Calu3 (cell line): ENCODE measurements at regions of chr6 and their contacts with region 1.

Region 1: GRCh38 chr6:3061501-3061941 is 6.8 kb upstream of the RIPK1 start:
- DNase-seq: peak; percentile 18
- H3K4me3 Mint-ChIP-seq: no peak overlapping the region
- H3K27ac Mint-ChIP-seq: no peak overlapping the region
- H3K4me1 Mint-ChIP-seq: no peaks in the 10 kb centered on the region
- H3K27me3 Mint-ChIP-seq: peaks cover 11% of the 10 kb centered on the region
- CTCF ChIP-seq: no peak

Region 2: DNA sequence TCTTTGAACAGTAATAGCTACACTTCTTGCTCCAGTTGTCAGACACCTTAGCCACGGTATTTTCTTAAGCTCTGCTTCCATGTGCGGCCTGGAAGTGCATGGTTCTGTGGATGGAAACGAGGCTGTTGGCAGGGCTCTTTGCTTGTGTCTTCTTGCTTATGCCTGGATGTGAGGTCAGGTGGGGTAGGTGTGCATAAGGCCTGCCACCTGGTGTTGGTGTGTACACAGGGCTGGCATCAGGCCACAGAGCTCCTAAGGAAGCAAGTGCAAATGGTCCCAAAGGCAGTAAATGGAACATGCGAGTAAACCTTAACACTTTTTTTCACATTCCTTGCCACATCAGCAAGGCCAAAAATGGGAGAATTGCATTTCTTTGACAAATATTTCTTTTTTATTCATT is 658.0 kb before region 1 on chr6:
- CTCF ChIA-PET with region 1: no interaction called
- intact Hi-C with region 1: no loop called
- DNase-seq: no peak
- H3K4me3 Mint-ChIP-seq: no peak overlapping the region
- H3K27ac Mint-ChIP-seq: no peak overlapping the region
- H3K4me1 Mint-ChIP-seq: no peaks in the 10 kb centered on the region
- H3K27me3 Mint-ChIP-seq: no peaks in the 10 kb centered on the region
- CTCF ChIP-seq: no peak

Region 3: DNA sequence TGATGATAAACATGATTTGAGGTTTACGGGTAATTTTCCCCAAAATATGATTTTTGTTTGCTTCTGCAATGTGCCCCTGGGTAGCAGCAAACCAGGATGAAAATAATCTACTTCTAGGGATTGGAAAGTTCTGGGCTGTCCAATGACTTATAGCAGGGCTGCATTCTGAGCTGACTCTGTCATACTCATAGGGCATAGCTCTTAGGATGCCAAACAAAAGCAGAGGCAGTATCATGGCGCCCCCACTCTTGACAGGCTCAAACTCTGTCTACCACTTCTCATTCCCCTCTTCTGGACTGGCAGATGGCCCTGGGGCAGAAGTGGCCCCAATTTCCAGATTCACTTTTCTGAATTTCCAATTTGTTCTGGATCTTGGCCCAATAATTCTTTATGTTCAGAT is 230.1 kb before region 1 on chr6:
- CTCF ChIA-PET with region 1: no interaction called
- intact Hi-C with region 1: no loop called
- DNase-seq: no peak
- H3K4me3 Mint-ChIP-seq: no peak overlapping the region
- H3K27ac Mint-ChIP-seq: no peak overlapping the region
- H3K4me1 Mint-ChIP-seq: peaks cover 19% of the 10 kb centered on the region
- H3K27me3 Mint-ChIP-seq: no peaks in the 10 kb centered on the region
- CTCF ChIP-seq: no peak

Region 4: DNA sequence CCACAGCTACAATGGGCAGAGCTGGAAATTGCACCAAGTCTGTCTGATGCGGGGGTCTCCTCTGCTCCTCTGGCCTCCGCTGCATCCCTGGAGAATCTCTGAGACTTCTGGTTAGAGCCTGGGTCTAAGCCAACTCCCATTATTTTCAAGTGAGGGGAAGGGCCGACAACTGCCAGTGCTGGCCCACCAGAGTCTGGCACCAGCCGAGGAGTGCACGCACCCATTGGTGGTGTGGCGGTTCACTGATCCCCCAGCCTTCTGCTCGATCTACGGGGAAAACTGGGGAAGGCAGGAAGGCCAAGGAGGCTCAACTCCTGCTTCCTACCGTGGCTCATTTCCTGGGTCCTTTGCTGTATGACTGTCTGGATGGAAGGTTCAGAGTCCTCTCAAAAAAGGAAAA is 55.6 kb before region 1 on chr6:
- CTCF ChIA-PET with region 1: interaction called, 4 read pairs
- intact Hi-C with region 1: loop called (anchors 2 kb)
- DNase-seq: no peak
- H3K4me3 Mint-ChIP-seq: no peak overlapping the region
- H3K27ac Mint-ChIP-seq: no peak overlapping the region
- H3K4me1 Mint-ChIP-seq: no peaks in the 10 kb centered on the region
- H3K27me3 Mint-ChIP-seq: no peaks in the 10 kb centered on the region
- CTCF ChIP-seq: no peak